ENCODE measurements at regions of chr11 and their contacts with region 1.

Region 1: GRCh38 chr11:61967116-61967923 is at the start of gene FTH1:
- DNase-seq: peak; percentile 97
- H3K4me3 ChIP-seq: peak within 1 kb of the TSS; percentile 82 to 95 (median 90)
- H3K27ac ChIP-seq: peak within 1 kb of the TSS; percentile 98 to 100 (median 99)
- H3K4me1 ChIP-seq: peaks cover 69 to 81% (median 79%) of the 10 kb centered on the region in 4 donors
- H3K27me3 ChIP-seq: no peaks in the 10 kb centered on the region
- CTCF ChIP-seq: peak in 1 of 3 experiments; percentile 6
- EP300 ChIP-seq: no peak
- POLR2A ChIP-seq: peak; percentile 98
- total RNA-seq, gene FTH1: 1,795 to 3,027 (median 2,719) TPM

Region 2: GRCh38 chr11:61891331-61892084 is 75.8 kb before region 1 on chr11 and contains the start of gene FADS3:
- intact Hi-C with region 1: loop called (anchors 5 kb)
- DNase-seq: peak; percentile 95
- H3K4me3 ChIP-seq: peak within 1 kb of the TSS; percentile 84 to 93 (median 88)
- H3K27ac ChIP-seq: peak within 1 kb of the TSS; percentile 88 to 96 (median 94)
- H3K4me1 ChIP-seq: peaks cover 39 to 52% (median 49%) of the 10 kb centered on the region in 4 donors
- H3K27me3 ChIP-seq: no peaks in the 10 kb centered on the region
- CTCF ChIP-seq: no peak
- EP300 ChIP-seq: no peak
- POLR2A ChIP-seq: peak; percentile 28
- total RNA-seq, gene FADS3: 42.4 to 103 (median 57.8) TPM

Measured in esophagus muscularis mucosa (tissue), 4 donors.